AG04450 (cell line): ENCODE measurements at regions of chr12 and their contacts with region 1.

Region 1: DNA sequence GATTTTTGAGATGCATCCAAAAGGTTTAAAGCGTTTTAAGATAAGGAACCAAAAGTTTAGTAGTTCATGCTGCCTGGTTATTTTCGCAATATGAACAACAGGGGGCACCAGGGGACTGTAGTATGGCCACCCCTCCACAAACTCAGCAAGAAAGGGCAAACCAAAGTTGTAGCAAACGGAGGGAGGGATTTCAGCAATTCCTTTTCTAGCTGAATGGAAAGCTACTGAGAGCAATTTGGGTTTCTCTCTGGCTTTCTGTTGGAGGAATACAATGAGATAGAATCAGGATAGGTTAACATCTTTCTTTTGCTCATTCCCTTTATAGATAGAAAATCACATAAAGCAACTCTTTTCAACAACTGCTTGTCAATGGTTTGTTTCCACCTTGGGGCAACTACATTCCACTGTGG is 62.5 kb downstream of the DRAM1 start:
- DNase-seq: peak; percentile 63
- H3K4me3 ChIP-seq: no peak overlapping the region
- H3K27ac ChIP-seq: no peak overlapping the region
- H3K27me3 ChIP-seq: no peaks in the 10 kb centered on the region
- CTCF ChIP-seq: peak; percentile 89

Region 2: DNA sequence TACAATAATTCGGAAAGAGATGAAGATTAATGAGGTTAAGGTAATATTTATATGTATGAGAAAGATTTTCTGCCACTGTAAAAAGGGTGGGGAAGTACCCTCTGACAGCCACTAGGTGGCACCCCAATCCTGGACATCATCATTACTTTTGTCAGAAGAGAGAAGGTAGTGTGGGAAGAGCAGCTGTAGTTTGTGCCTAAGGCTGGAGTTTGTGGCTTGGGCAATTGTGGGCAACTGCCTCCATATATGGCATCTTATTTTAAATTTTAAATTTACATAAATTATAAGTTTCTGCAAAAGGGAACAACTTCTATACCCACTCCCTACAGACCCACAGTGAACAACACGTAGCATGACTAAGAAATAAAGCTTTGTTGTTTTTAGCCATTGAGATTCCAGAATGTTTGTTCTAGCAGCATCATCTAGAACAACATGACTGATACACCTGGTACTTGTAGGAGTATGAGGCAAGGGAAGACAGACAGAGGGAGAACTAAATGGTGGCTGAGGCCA is 166.2 kb before region 1 on chr12:
- CTCF ChIA-PET with region 1: interaction called, 10 read pairs
- POLR2A ChIA-PET with region 1: no interaction called
- DNase-seq: peak; percentile 34
- H3K4me3 ChIP-seq: no peak overlapping the region
- H3K27ac ChIP-seq: no peak overlapping the region
- H3K27me3 ChIP-seq: no peaks in the 10 kb centered on the region
- CTCF ChIP-seq: peak; percentile 86

Region 3: DNA sequence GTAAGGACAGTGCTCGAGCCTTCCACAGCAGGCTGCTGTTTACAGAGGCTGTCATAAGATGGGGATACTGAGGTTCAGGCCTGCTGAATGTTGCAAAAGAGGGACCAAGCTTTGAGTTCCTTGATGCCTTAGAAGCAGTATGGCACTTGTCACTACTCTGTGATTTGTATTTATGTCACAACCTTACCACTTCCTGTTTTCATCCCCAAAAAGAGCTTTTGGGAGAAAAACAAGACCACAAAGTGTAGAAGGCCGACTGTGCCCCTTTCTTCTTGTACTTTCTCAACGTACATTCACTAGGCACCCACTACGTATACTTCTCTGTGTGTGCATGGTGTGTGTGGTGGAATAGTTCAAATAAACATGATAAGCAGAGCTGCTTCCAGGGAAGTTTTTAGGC is 27.6 kb after region 1 on chr12:
- CTCF ChIA-PET with region 1: interaction called, 10 read pairs
- POLR2A ChIA-PET with region 1: no interaction called
- DNase-seq: no peak
- H3K4me3 ChIP-seq: no peak overlapping the region
- H3K27ac ChIP-seq: no peak overlapping the region
- H3K27me3 ChIP-seq: no peaks in the 10 kb centered on the region
- CTCF ChIP-seq: no peak

Region 4: GRCh38 chr12:102119674-102120563 is 180.1 kb after region 1 on chr12 and contains the starts of genes NUP37 and PARPBP:
- CTCF ChIA-PET with region 1: interaction called, 13 read pairs
- POLR2A ChIA-PET with region 1: no interaction called
- DNase-seq: peak; percentile 50
- H3K4me3 ChIP-seq: peak within 1 kb of the TSS; percentile 85
- H3K27ac ChIP-seq: peak within 1 kb of the TSS; percentile 79
- H3K27me3 ChIP-seq: no peaks in the 10 kb centered on the region
- CTCF ChIP-seq: no peak
- polyA plus RNA-seq, gene NUP37: 42.6 and 62.5 TPM in 2 replicates
- polyA plus RNA-seq, gene PARPBP: 4.2 and 6.0 TPM in 2 replicates

Region 5: GRCh38 chr12:102740141-102740955 is 800.5 kb after region 1 on chr12:
- CTCF ChIA-PET with region 1: interaction called, 11 read pairs
- POLR2A ChIA-PET with region 1: no interaction called
- DNase-seq: no peak
- H3K4me3 ChIP-seq: no peak overlapping the region
- H3K27ac ChIP-seq: no peak overlapping the region
- H3K27me3 ChIP-seq: no peaks in the 10 kb centered on the region
- CTCF ChIP-seq: peak; percentile 17